ENCODE measurements at regions of chr2 and their contacts with region 1.

Region 1: GRCh38 chr2:150234787-150235446 is 252.6 kb downstream of the RND3 start:
- DNase-seq: peak; percentile 93
- ATAC-seq: peak; percentile 94
- H3K4me3 ChIP-seq: peak overlapping the region; percentile 20; the same call in 1 of the 2 replicates
- H3K27ac ChIP-seq: peak overlapping the region; percentile 88
- H3K4me1 ChIP-seq: peaks cover 6% of the 10 kb centered on the region
- H3K27me3 ChIP-seq: no peaks in the 10 kb centered on the region
- CTCF ChIP-seq: no peak
- POLR2A ChIP-seq: no peak
- RAD21 ChIP-seq: peak; percentile 27

Region 2: DNA sequence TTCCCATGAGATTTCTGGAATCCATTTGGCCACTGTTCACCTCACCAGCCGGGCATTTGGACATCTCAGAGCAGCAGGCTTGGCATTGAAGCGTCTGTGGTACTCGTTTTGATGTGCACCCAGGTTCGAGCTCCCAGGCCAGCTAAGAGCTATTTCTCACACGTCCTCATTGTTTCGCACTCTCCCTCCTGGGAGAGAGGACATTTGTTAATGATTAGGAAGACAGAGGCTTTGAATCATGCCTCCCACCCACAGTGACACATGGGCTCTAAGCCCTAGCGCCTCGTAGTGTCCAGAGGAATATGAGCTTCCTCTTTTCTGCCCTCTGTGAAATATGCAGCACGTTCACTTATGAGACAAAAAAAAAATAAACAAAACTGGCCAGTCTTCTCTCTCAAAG is 109.2 kb before region 1 on chr2:
- CTCF ChIA-PET with region 1: no interaction called
- POLR2A ChIA-PET with region 1: no interaction called
- dilution Hi-C with region 1: no loop called
- in situ Hi-C with region 1: no loop called
- intact Hi-C with region 1: loop called (anchors 5 kb)
- DNase-seq: peak; percentile 86
- ATAC-seq: peak; percentile 65
- H3K4me3 ChIP-seq: no peak overlapping the region
- H3K27ac ChIP-seq: no peak overlapping the region
- H3K4me1 ChIP-seq: peaks cover 13% of the 10 kb centered on the region
- H3K27me3 ChIP-seq: no peaks in the 10 kb centered on the region
- CTCF ChIP-seq: peak; percentile 21; the same call in 1 of the 2 replicates
- POLR2A ChIP-seq: no peak
- RAD21 ChIP-seq: peak; percentile 35; the same call in 1 of the 2 replicates